Activated CD4-positive, alpha-beta T cell treated with anti-CD3 and anti-CD28 coated beads, Interleukin-2, amount 10 ng/mL, durations not matched to agents 24 days and 14 days (primary cell): ENCODE measurements at regions of chr4 and their contacts with region 1.

Region 1: GRCh38 chr4:37686373-37687193 is at the start of gene RELL1:
- DNase-seq: peak; percentile 100
- H3K4me3 Mint-ChIP-seq: peak within 1 kb of the TSS; percentile 91
- H3K27ac Mint-ChIP-seq: peak within 1 kb of the TSS; percentile 96
- H3K4me1 Mint-ChIP-seq: peaks cover 36% of the 10 kb centered on the region
- H3K27me3 Mint-ChIP-seq: peaks cover 8% of the 10 kb centered on the region
- total RNA-seq, gene RELL1: 15.7 and 19.1 TPM in 2 replicates

Region 2: GRCh38 chr4:37549041-37549440 is 137.5 kb before region 1 on chr4:
- intact Hi-C with region 1: no loop called
- DNase-seq: no peak
- H3K4me3 Mint-ChIP-seq: no peak overlapping the region
- H3K27ac Mint-ChIP-seq: no peak overlapping the region
- H3K4me1 Mint-ChIP-seq: no peaks in the 10 kb centered on the region
- H3K27me3 Mint-ChIP-seq: peaks cover under 1% of the 10 kb centered on the region

Region 3: GRCh38 chr4:37603070-37603468 is 83.5 kb before region 1 on chr4:
- intact Hi-C with region 1: loop called (anchors 2 kb)
- DNase-seq: peak; percentile 93
- H3K4me3 Mint-ChIP-seq: peak overlapping the region; percentile 4
- H3K27ac Mint-ChIP-seq: peak overlapping the region; percentile 35
- H3K4me1 Mint-ChIP-seq: peaks cover 20% of the 10 kb centered on the region
- H3K27me3 Mint-ChIP-seq: no peaks in the 10 kb centered on the region

Region 4: DNA sequence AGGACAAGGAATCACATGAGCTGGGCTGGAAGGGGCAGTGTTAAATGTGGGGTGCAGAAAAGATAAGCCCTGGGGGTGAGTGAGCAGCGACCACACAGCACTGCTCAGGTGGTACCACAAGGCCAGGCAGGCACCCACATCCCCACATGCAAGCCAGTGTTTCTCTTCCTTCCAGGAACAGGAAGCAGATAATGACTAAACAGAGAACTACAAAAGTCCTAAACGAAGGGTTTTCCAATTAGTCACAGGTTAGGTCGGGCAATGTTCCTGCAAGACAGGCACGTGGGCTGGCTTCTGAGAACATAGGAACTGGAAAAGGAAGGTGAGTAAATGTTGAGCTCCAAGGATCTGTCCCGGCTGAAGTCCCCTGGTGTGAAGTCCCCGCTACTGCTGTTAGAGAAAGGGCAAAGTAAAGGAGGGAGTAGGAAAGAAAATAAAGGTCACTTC is 19.9 kb before region 1 on chr4:
- intact Hi-C with region 1: loop called (anchors 2 kb)
- DNase-seq: peak; percentile 70
- H3K4me3 Mint-ChIP-seq: peak overlapping the region; percentile 49
- H3K27ac Mint-ChIP-seq: peak overlapping the region; percentile 60
- H3K4me1 Mint-ChIP-seq: peaks cover 56% of the 10 kb centered on the region
- H3K27me3 Mint-ChIP-seq: no peaks in the 10 kb centered on the region

Region 5: DNA sequence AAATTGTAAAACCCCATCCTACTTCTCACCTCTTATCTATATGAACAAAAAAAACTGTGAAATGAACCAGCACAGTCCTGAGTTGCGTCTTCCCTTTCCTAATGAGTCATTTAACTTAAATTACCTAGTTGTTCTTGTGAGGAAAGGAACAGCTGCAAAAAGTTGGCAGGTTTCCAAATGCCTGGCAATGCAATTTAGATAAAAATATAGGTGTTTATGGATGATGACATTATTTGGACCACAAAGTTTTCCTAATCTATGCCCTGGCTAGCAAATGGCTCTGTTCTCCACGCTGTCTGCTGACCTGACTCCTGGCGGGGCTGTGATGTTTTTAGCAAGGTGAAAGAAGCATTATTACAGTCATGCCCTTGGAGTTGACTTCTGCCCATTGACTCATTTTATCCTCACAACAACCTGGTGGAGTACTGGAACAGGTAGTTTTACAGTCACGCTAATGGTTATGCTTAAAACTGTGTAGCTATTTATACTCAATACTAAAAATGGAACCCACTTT is 29.4 kb after region 1 on chr4:
- intact Hi-C with region 1: loop called (anchors 1 kb)
- DNase-seq: peak; percentile 61
- H3K4me3 Mint-ChIP-seq: no peak overlapping the region
- H3K27ac Mint-ChIP-seq: peak overlapping the region; percentile 8
- H3K4me1 Mint-ChIP-seq: peaks cover 8% of the 10 kb centered on the region
- H3K27me3 Mint-ChIP-seq: peaks cover 14% of the 10 kb centered on the region

Region 6: GRCh38 chr4:37977471-37978247 is 291.1 kb after region 1 on chr4:
- intact Hi-C with region 1: loop called (anchors 5 kb)
- DNase-seq: peak; percentile 93
- H3K4me3 Mint-ChIP-seq: peak overlapping the region; percentile 87
- H3K27ac Mint-ChIP-seq: peak overlapping the region; percentile 86
- H3K4me1 Mint-ChIP-seq: peaks cover 24% of the 10 kb centered on the region
- H3K27me3 Mint-ChIP-seq: peaks cover 2% of the 10 kb centered on the region

Region 7: DNA sequence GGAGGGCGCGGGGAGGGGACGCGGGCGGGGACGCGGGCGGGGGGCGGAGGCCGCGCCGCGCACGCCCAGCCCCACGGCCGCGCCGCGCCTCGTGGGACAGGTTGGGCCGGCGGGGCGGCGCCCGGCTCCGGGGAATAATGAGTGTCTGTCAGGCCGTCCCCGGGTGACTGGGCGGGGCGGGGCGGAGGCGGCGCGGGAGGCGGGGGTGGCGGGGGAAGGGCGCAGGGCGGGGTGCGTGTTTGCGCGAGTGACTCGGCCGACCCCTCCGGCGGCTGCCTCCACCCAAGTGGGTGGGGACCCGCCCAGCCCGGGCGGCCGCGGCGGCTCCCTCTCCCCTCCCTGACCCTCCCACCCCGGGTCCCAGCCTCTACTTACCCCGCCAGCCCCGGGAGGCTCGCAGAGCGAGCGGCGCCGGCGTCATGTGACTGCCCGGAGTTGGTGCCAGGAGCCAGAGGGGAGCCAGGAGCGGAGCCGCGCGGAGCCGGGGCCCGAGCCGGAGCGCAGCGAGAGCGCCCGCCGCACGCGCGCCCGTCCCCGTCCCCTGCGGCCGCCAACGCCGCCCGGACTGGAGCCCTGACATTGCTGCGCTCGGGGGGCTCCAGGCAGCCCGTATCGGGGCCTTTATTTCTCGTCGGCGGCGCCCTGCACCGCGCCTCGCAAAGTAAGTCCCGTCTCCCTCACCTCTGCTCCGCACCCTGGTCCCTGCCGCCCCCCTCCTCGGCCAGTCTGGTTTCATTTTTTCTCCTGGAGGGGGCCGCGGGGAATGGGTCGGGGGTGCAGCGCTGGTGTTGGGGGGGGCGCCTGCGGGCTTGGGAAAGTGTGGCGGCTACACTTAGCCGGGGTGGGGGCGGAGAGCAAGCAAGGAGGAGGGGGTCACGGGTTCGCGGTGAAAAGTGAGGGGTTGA is 977.5 kb after region 1 on chr4 and contains the start of gene KLF3:
- intact Hi-C with region 1: loop called (anchors 10 kb)
- DNase-seq: peak; percentile 96
- H3K4me3 Mint-ChIP-seq: peak within 1 kb of the TSS; percentile 76
- H3K27ac Mint-ChIP-seq: peak within 1 kb of the TSS; percentile 65
- H3K4me1 Mint-ChIP-seq: peaks cover 40% of the 10 kb centered on the region
- H3K27me3 Mint-ChIP-seq: peaks cover 47% of the 10 kb centered on the region
- total RNA-seq, gene KLF3: 0.83 and 1.0 TPM in 2 replicates